ENCODE measurements at regions of chr7 and their contacts with region 1.

Region 1: DNA sequence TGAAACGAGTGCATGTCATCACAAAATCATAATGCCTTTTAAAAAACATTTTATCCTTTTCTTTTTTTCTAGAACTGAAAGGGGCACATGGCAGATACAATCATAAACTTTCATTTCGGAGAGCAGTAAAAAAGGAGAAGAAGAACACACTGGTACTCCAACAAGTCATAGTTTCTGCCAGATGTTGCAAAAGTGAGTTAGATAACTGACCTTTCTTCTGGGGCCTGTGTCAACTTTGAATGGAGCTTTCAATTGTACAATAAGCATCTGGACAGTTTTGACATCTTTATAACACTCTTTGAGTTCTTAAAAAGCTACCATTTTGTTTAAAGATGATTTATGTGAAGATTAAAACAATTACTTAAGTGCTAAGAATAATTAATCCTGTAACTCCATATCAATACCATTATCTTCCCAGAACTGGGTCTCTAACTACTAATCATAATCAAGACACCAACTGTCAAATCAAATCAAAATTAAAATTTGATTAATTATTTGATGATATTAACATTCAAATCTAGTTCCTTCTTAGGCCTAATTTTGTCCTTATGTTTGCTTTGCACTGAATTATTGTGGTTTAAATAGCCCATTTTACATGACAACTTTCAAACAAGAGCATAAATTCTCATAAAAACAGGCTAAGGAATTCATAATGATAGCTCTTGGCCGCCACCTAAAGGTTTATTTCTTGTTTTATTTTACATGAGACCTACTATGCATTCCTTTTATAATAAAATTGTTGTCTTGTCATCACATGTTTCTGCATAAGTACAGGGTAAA is 19.5 kb upstream of the ITGB8 start:
- DNase-seq: peak in 2 of 4 experiments; percentile 24 to 75
- ATAC-seq: peak; percentile 74
- H3K4me3 ChIP-seq: no peak overlapping the region
- H3K27ac ChIP-seq: no peak overlapping the region
- H3K4me1 ChIP-seq: peaks cover 9 to 14% of the 10 kb centered on the region in 2 experiments
- H3K27me3 ChIP-seq: no peaks in the 10 kb centered on the region
- CTCF ChIP-seq: peak; percentile 34 to 61 (median 50); a peak in 3 of 6 replicates
- EP300 ChIP-seq: no peak
- POLR2A ChIP-seq: no peak
- RAD21 ChIP-seq: peak; percentile 85 to 86

Region 2: GRCh38 chr7:19754521-19755116 is 556.5 kb before region 1 on chr7:
- CTCF ChIA-PET with region 1: interaction called, 5 read pairs
- POLR2A ChIA-PET with region 1: no interaction called
- in situ Hi-C with region 1: no loop called
- intact Hi-C with region 1: loop called (anchors 1 kb)
- DNase-seq: peak; percentile 11 to 34 (median 12)
- ATAC-seq: no peak; the same call in 2 of the 3 replicates
- H3K4me3 ChIP-seq: no peak overlapping the region
- H3K27ac ChIP-seq: no peak overlapping the region
- H3K4me1 ChIP-seq: no peaks in the 10 kb centered on the region
- H3K27me3 ChIP-seq: no peaks in the 10 kb centered on the region
- CTCF ChIP-seq: peak; percentile 36 to 71 (median 47); a peak in 4 of 6 replicates
- EP300 ChIP-seq: no peak
- POLR2A ChIP-seq: no peak
- RAD21 ChIP-seq: peak; percentile 55 to 68

Region 3: DNA sequence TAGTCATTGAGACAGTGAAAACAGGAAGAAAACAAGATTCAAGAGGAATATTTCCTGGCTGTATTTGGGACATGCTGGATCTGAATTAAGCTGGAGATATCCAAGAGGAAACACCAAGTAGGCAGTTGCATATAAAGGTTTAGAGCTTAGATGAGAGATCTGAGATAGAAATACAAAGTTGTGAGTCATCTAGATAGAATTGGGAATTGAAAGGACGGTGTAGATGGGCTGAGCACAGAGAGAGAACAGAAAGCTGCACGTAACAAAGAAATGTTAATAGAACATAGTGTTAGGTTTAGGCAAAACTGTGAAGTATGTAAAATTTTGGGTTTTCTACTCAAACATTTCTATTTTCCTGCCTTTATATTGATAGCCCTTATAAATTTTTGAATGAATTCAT is 319.2 kb before region 1 on chr7:
- CTCF ChIA-PET with region 1: no interaction called
- POLR2A ChIA-PET with region 1: no interaction called
- in situ Hi-C with region 1: no loop called
- intact Hi-C with region 1: no loop called
- DNase-seq: no peak
- ATAC-seq: no peak
- H3K4me3 ChIP-seq: no peak overlapping the region
- H3K27ac ChIP-seq: no peak overlapping the region
- H3K4me1 ChIP-seq: no peaks in the 10 kb centered on the region
- H3K27me3 ChIP-seq: no peaks in the 10 kb centered on the region
- CTCF ChIP-seq: no peak
- EP300 ChIP-seq: no peak
- POLR2A ChIP-seq: no peak
- RAD21 ChIP-seq: no peak

Region 4: DNA sequence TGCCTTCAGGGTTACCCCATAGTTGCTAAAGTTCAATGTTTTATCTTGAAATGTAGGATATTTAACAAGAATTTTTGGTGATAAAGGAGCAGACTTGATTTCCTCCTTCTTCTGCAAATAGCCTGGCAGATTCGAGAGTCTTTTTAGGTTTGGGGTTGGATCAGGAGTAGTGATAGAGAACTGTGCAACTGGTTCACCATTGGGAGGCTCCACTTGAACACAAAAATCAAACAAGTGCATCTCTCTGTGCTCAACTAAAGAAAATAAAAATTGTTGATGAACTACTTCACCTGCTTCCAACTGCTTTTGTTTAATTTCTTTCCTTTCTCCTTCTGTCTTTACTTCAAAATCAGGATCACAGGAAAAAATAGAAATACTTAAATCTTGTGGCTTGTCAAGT is 152.5 kb before region 1 on chr7:
- CTCF ChIA-PET with region 1: interaction called, 20 read pairs
- POLR2A ChIA-PET with region 1: interaction called, 3 read pairs
- in situ Hi-C with region 1: no loop called
- intact Hi-C with region 1: loop called (anchors 1 kb)
- DNase-seq: peak in 1 of 4 experiments; percentile 25
- ATAC-seq: peak; percentile 86
- H3K4me3 ChIP-seq: no peak overlapping the region
- H3K27ac ChIP-seq: no peak overlapping the region
- H3K4me1 ChIP-seq: no peaks in the 10 kb centered on the region
- H3K27me3 ChIP-seq: no peaks in the 10 kb centered on the region
- CTCF ChIP-seq: peak in 2 of 3 experiments; percentile 24 to 54; a peak in 2 of 6 replicates
- EP300 ChIP-seq: no peak
- POLR2A ChIP-seq: no peak
- RAD21 ChIP-seq: peak; percentile 65 to 73

Region 5: DNA sequence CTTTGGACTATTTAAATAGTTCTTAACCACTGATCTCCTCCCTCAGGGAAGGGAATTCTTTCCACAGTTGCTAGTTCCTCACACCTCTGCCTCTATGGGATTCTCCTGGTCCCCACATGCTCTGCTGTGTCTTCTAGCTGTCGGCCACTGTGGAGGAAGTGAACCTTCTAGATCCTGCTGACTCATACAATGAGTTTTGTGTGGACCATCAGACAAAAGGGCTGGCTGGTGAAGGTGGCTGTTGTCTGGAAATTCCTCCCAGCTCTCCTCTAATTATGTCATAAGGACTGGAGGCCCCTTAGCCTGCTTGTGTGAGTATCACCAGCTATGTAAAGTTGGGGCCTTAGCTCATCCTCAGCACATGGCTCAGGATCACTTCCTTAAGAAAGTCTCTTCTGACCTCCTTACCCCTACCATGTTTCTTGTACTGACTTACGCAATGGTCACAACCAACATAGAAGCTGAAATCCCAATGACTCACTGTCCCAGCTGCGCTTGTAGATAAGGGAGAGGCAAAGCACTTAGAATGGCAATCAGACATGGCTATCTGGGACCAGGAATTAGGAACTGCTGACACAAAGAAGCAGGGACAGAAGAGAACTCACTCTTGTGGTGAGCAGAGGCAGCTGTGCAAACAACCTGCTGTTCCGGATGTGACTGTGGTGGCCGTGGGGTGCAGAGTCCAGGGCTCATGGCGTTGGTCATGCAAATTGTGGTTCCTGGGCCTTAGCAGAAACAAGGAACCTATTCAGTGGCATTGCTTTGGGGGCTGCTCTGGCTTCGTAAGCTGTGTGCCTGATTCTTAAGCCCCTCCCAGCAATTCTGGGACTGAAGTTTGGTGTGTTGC is 91.5 kb before region 1 on chr7:
- CTCF ChIA-PET with region 1: interaction called, 3 read pairs
- POLR2A ChIA-PET with region 1: interaction called, 5 read pairs
- in situ Hi-C with region 1: no loop called
- intact Hi-C with region 1: loop called (anchors 1 kb)
- DNase-seq: peak; percentile 84 to 99 (median 85)
- ATAC-seq: peak; percentile 86
- H3K4me3 ChIP-seq: no peak overlapping the region
- H3K27ac ChIP-seq: peak overlapping the region; percentile 99
- H3K4me1 ChIP-seq: peaks cover 6 to 66% of the 10 kb centered on the region in 2 experiments
- H3K27me3 ChIP-seq: no peaks in the 10 kb centered on the region
- CTCF ChIP-seq: peak in 2 of 3 experiments; percentile 18 to 32; a peak in 3 of 6 replicates
- EP300 ChIP-seq: peak; percentile 100
- POLR2A ChIP-seq: peak; percentile 65; the same call in 1 of the 2 replicates
- RAD21 ChIP-seq: peak; percentile 52 to 54